GM10248 (cell line): ENCODE measurements at regions of chr5 and their contacts with region 1.

Region 1: GRCh38 chr5:158435161-158435616 is 576.2 kb upstream of the CLINT1 start:
- DNase-seq: peak; percentile 34
- CTCF ChIP-seq: no peak

Region 2: GRCh38 chr5:158451203-158451992 is 16.2 kb after region 1 on chr5:
- CTCF ChIA-PET with region 1: interaction called, 10 read pairs
- POLR2A ChIA-PET with region 1: no interaction called
- DNase-seq: no peak
- CTCF ChIP-seq: no peak

Region 3: GRCh38 chr5:158482127-158482526 is 46.9 kb after region 1 on chr5:
- CTCF ChIA-PET with region 1: no interaction called
- POLR2A ChIA-PET with region 1: no interaction called
- DNase-seq: no peak
- CTCF ChIP-seq: no peak